CD8-positive, alpha-beta T cell (primary cell): ENCODE measurements at regions of chr1 and their contacts with region 1.

Region 1: DNA sequence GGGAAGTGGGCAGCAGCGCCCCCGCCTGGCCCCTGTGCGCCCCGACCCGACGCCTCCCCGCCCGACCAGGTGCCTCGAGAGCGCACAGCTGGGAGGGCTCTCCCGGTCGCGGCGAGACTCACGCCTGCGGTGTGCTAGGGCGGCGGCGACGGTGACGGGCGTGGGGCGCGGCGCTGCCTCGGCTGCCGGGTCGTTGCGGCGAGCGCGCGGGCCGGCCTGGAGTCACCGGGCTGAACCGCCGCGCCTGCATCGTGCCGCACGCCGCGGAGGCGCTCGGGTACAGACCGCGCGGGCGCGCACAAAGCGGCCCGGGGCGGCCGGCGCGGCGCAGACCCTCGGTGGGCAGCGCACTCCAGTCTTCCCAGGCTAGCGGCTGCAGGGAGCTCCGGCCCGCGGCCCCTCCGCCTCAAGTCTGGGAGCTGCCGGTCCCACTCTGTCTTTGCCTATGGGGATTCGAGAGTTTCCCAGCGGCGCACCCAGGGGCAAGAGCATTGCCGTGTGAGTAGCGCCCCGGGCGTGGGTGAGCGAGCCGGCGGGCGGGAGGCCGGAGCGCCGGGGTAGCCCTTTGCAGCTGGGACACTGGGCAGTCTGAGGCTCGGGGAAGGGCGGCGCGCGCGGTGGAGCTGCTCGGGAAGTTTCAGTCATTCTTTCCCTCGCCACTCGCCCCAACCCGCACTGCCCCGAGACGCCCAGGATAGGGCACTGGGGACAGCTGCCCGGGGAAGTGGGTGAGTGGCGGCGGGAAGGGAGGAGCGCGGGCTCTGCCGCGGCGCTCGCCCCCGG is at the start of gene SLC35F3:
- DNase-seq: no peak
- ATAC-seq: no peak
- H3K4me3 ChIP-seq: no peak within 1 kb of the TSS
- H3K4me3 Mint-ChIP-seq: no peak within 1 kb of the TSS
- H3K27ac ChIP-seq: no peak within 1 kb of the TSS
- H3K27ac Mint-ChIP-seq: no peak within 1 kb of the TSS
- H3K4me1 ChIP-seq: no peaks in the 10 kb centered on the region
- H3K4me1 Mint-ChIP-seq: no peaks in the 10 kb centered on the region
- H3K27me3 ChIP-seq: peaks cover 0 to 3% of the 10 kb centered on the region in 2 experiments
- H3K27me3 Mint-ChIP-seq: peaks cover 51% of the 10 kb centered on the region
- CTCF ChIP-seq: no peak
- total RNA-seq, gene SLC35F3: not detected

Region 2: GRCh38 chr1:233873666-233874065 is 31.2 kb before region 1 on chr1:
- CTCF ChIA-PET with region 1: no interaction called
- POLR2A ChIA-PET with region 1: no interaction called
- intact Hi-C with region 1: loop called in 1 of 2 experiments (anchors 2 kb)
- DNase-seq: no peak
- ATAC-seq: no peak
- H3K4me3 ChIP-seq: no peak overlapping the region
- H3K4me3 Mint-ChIP-seq: no peak overlapping the region
- H3K27ac ChIP-seq: no peak overlapping the region
- H3K27ac Mint-ChIP-seq: no peak overlapping the region
- H3K4me1 ChIP-seq: no peaks in the 10 kb centered on the region
- H3K4me1 Mint-ChIP-seq: no peaks in the 10 kb centered on the region
- H3K27me3 ChIP-seq: no peaks in the 10 kb centered on the region
- H3K27me3 Mint-ChIP-seq: peaks cover 6% of the 10 kb centered on the region
- CTCF ChIP-seq: no peak

Region 3: GRCh38 chr1:233916706-233917105 is 11.9 kb after region 1 on chr1:
- CTCF ChIA-PET with region 1: no interaction called
- POLR2A ChIA-PET with region 1: no interaction called
- intact Hi-C with region 1: no loop called
- DNase-seq: no peak
- ATAC-seq: no peak
- H3K4me3 ChIP-seq: no peak overlapping the region
- H3K4me3 Mint-ChIP-seq: no peak overlapping the region
- H3K27ac ChIP-seq: no peak overlapping the region
- H3K27ac Mint-ChIP-seq: no peak overlapping the region
- H3K4me1 ChIP-seq: no peaks in the 10 kb centered on the region
- H3K4me1 Mint-ChIP-seq: no peaks in the 10 kb centered on the region
- H3K27me3 ChIP-seq: no peaks in the 10 kb centered on the region
- H3K27me3 Mint-ChIP-seq: peaks cover 2% of the 10 kb centered on the region
- CTCF ChIP-seq: no peak

Region 4: DNA sequence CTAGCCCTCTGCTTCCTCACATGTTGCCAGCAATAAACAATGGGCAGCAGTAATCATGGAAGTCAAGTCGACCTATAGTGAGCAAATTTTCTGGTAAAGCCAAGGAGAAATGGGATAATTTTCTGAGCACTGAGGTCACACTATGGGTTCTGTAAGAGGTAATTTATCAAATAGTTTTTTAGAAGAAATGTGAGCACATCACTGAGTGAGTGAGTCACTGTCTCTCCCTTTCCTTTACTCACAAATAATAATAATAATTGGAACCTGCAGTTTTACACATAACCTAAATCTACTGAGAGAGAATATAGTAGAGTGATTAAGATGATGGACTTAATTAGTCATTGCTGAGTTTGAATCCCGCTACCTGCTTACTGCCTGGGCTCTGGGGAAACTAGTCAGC is 23.3 kb after region 1 on chr1:
- CTCF ChIA-PET with region 1: no interaction called
- POLR2A ChIA-PET with region 1: no interaction called
- intact Hi-C with region 1: no loop called
- DNase-seq: no peak
- ATAC-seq: no peak
- H3K4me3 ChIP-seq: no peak overlapping the region
- H3K4me3 Mint-ChIP-seq: no peak overlapping the region
- H3K27ac ChIP-seq: no peak overlapping the region
- H3K27ac Mint-ChIP-seq: no peak overlapping the region
- H3K4me1 ChIP-seq: no peaks in the 10 kb centered on the region
- H3K4me1 Mint-ChIP-seq: no peaks in the 10 kb centered on the region
- H3K27me3 ChIP-seq: no peaks in the 10 kb centered on the region
- H3K27me3 Mint-ChIP-seq: peaks cover 10% of the 10 kb centered on the region
- CTCF ChIP-seq: no peak

Region 5: GRCh38 chr1:233940908-233941307 is 36.1 kb after region 1 on chr1:
- CTCF ChIA-PET with region 1: no interaction called
- POLR2A ChIA-PET with region 1: no interaction called
- intact Hi-C with region 1: no loop called
- DNase-seq: no peak
- ATAC-seq: no peak
- H3K4me3 ChIP-seq: no peak overlapping the region
- H3K4me3 Mint-ChIP-seq: no peak overlapping the region
- H3K27ac ChIP-seq: no peak overlapping the region
- H3K27ac Mint-ChIP-seq: no peak overlapping the region
- H3K4me1 ChIP-seq: no peaks in the 10 kb centered on the region
- H3K4me1 Mint-ChIP-seq: no peaks in the 10 kb centered on the region
- H3K27me3 ChIP-seq: no peaks in the 10 kb centered on the region
- H3K27me3 Mint-ChIP-seq: peaks cover 3% of the 10 kb centered on the region
- CTCF ChIP-seq: no peak

Region 6: DNA sequence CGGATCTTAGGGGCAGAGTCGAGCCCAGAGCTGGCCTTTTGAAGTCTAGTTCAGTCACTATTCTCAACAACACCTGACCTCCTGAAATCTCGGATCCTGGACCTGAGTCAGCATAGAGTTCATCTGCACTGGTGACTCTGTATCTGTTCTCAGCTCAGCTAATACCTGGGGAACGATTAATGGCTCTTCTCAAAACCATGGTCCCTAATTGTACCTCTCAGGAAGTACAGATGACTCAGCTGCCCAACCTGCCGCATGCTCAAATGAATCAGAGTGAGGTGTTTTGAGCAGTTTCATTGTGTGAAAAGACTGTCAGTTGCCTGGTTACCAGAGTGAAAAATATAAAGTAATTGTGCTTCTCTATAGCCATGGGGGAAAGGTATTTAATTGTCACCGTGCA is 88.8 kb after region 1 on chr1:
- CTCF ChIA-PET with region 1: no interaction called
- POLR2A ChIA-PET with region 1: no interaction called
- intact Hi-C with region 1: no loop called
- DNase-seq: no peak
- ATAC-seq: no peak
- H3K4me3 ChIP-seq: no peak overlapping the region
- H3K4me3 Mint-ChIP-seq: no peak overlapping the region
- H3K27ac ChIP-seq: no peak overlapping the region
- H3K27ac Mint-ChIP-seq: no peak overlapping the region
- H3K4me1 ChIP-seq: no peaks in the 10 kb centered on the region
- H3K4me1 Mint-ChIP-seq: no peaks in the 10 kb centered on the region
- H3K27me3 ChIP-seq: peaks cover 0 to 1% of the 10 kb centered on the region in 2 experiments
- H3K27me3 Mint-ChIP-seq: peaks cover 16% of the 10 kb centered on the region
- CTCF ChIP-seq: no peak